HEK293 (cell line): ENCODE measurements at regions of chr16 and their contacts with region 1.

Region 1: DNA sequence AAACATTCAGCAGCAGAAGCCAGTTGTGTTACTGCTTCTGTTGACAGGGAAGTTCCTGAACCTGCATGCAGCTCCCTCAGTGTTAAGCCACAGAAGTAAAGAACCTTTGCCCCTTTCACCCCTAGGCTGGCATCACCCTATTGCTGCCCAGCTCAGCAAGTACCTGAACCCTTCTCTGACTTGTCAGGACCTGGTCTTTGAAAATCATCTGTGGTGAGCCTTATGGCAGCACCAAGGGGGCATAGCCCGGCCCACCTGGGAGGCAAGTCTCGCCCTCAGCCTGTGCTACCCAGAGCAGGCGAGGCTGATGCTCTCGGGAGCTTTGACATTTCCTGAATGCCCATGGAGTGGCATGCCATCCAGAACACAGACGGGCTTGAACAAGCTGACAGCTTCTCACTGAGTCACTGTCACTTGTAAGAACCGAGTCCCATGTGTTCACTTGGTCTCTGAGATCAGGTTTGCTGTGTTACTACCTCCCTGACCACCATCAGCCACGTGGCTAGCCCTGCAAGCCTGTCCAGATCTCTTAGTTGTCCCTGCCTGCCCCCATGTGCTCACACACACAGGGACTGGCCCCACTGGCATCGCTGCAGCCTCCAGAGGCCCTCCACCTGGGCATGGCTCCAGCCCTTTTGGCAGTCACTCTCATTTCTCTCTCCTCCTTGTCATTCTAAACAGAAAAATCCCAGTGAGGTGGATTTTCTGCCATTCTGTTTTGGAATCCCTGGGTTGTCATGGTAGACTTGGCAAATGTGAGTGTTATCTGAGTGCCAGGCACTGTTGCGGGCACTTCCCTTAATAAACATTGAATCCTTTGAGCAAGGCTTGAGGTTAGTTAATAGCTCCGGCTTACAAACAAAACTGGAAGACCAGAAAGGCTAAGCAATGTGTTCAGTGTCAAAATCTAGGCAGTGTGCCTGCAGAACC is 2.9 kb upstream of the CARMIL2 start:
- H3K4me3 ChIP-seq: no peak overlapping the region
- H3K27ac ChIP-seq: no peak overlapping the region
- H3K4me1 ChIP-seq: no peaks in the 10 kb centered on the region
- CTCF ChIP-seq: no peak

Region 2: GRCh38 chr16:67499106-67499505 is 142.9 kb before region 1 on chr16:
- CTCF ChIA-PET with region 1: interaction called, 12 read pairs
- POLR2A ChIA-PET with region 1: interaction called, 4 read pairs
- H3K4me3 ChIP-seq: no peak overlapping the region
- H3K27ac ChIP-seq: no peak overlapping the region
- H3K4me1 ChIP-seq: no peaks in the 10 kb centered on the region
- CTCF ChIP-seq: no peak

Region 3: DNA sequence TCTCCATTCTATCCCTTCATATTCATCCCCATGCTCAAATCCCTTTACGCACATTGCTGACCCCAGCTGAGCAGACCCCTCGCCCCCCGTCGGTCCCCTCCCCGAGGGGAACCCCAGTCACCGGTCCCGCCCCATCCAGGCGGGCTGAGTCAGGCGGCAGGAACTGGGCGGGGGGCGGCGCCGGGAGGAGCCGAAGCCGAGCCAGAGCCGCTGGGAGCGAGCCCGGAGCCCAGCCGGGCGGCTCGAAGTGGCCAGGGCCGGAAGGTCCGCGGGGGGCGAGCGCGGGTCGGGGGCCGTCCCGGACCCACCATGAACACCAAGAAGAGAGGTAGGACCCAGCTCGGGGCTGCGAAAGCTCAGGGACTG is 104.8 kb before region 1 on chr16:
- CTCF ChIA-PET with region 1: interaction called, 11 read pairs
- POLR2A ChIA-PET with region 1: no interaction called
- H3K4me3 ChIP-seq: peak overlapping the region; percentile 34
- H3K27ac ChIP-seq: no peak overlapping the region
- H3K4me1 ChIP-seq: no peaks in the 10 kb centered on the region; the same call in 1 of the 2 replicates
- CTCF ChIP-seq: no peak

Region 4: GRCh38 chr16:67546761-67547422 is 95.2 kb before region 1 on chr16:
- CTCF ChIA-PET with region 1: interaction called, 119 read pairs
- POLR2A ChIA-PET with region 1: interaction called, 10 read pairs
- H3K4me3 ChIP-seq: no peak overlapping the region
- H3K27ac ChIP-seq: no peak overlapping the region
- H3K4me1 ChIP-seq: no peaks in the 10 kb centered on the region
- CTCF ChIP-seq: peak; percentile 98

Region 5: GRCh38 chr16:67561824-67562525 is 80.1 kb before region 1 on chr16:
- CTCF ChIA-PET with region 1: interaction called, 15 read pairs
- POLR2A ChIA-PET with region 1: interaction called, 13 read pairs
- H3K4me3 ChIP-seq: peak overlapping the region; percentile 98
- H3K27ac ChIP-seq: peak overlapping the region; percentile 100
- H3K4me1 ChIP-seq: peaks cover 9% of the 10 kb centered on the region; the same call in 1 of the 2 replicates
- CTCF ChIP-seq: no peak

Region 6: GRCh38 chr16:67660564-67661028 is 18.6 kb after region 1 on chr16 and contains the start of gene PARD6A:
- CTCF ChIA-PET with region 1: interaction called, 19 read pairs
- POLR2A ChIA-PET with region 1: interaction called, 7 read pairs
- H3K4me3 ChIP-seq: peak within 1 kb of the TSS; percentile 78
- H3K27ac ChIP-seq: peak within 1 kb of the TSS; percentile 75
- H3K4me1 ChIP-seq: 0 out of 2 replicates have a peak, but pooled peaks cover 4% of the 10 kb centered on the region
- CTCF ChIP-seq: no peak

Region 7: DNA sequence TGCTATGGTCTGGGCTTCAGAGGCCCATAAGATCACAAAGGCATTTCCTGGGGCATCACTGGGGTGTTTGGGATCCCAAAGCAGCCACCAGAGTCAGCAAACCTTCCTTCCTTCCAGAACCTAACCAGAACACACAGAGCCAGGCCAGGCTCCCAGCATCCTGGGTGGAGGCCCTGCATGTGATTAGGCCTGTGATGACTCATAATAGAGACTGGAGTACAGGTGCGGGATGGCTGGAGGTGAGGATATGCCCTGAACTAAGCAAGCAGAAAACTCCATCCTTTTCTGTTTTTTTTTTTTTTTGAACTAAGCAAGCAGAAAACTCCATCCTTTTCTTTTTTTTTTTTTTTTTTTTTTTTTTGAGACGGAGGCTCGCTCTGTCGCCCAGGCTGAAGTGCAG is 94.8 kb after region 1 on chr16:
- CTCF ChIA-PET with region 1: no interaction called
- POLR2A ChIA-PET with region 1: no interaction called
- H3K4me3 ChIP-seq: no peak overlapping the region
- H3K27ac ChIP-seq: no peak overlapping the region
- H3K4me1 ChIP-seq: no peaks in the 10 kb centered on the region
- CTCF ChIP-seq: no peak

Region 8: DNA sequence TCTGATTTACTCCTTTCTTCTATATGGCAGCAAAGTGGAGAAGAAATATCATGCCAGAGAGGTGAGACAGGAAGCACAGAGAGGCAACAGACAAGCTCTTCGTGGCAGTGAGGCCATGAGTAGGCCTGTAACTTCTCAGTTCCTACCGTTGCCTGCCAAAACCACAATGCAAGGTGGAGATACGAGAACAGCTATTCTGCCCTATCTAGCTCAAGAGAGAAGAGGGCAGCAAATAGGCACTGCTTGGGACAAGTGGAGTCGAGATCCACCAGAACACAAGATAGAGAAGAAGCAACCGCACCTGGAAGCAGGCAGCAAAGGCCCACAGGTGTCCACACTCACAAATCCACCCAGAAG is 139.5 kb after region 1 on chr16:
- CTCF ChIA-PET with region 1: no interaction called
- POLR2A ChIA-PET with region 1: no interaction called
- H3K4me3 ChIP-seq: no peak overlapping the region
- H3K27ac ChIP-seq: no peak overlapping the region
- H3K4me1 ChIP-seq: peaks cover 5% of the 10 kb centered on the region
- CTCF ChIP-seq: no peak